SK-N-SH (cell line): ENCODE measurements at regions of chr4 and their contacts with region 1.

Region 1: GRCh38 chr4:8221476-8221875 is 22.4 kb downstream of the SH3TC1 start:
- DNase-seq: peak; percentile 80
- H3K4me3 ChIP-seq: no peak overlapping the region
- H3K27ac ChIP-seq: peak overlapping the region; percentile 40 to 98; a peak in 3 of 4 replicates
- H3K4me1 ChIP-seq: peaks cover 0 to 27% of the 10 kb centered on the region in 2 experiments; a peak in 1 of 4 replicates
- H3K27me3 ChIP-seq: no peaks in the 10 kb centered on the region
- CTCF ChIP-seq: no peak
- EP300 ChIP-seq: peak in 1 of 2 experiments; percentile 97; a peak in 2 of 4 replicates
- RAD21 ChIP-seq: no peak

Region 2: DNA sequence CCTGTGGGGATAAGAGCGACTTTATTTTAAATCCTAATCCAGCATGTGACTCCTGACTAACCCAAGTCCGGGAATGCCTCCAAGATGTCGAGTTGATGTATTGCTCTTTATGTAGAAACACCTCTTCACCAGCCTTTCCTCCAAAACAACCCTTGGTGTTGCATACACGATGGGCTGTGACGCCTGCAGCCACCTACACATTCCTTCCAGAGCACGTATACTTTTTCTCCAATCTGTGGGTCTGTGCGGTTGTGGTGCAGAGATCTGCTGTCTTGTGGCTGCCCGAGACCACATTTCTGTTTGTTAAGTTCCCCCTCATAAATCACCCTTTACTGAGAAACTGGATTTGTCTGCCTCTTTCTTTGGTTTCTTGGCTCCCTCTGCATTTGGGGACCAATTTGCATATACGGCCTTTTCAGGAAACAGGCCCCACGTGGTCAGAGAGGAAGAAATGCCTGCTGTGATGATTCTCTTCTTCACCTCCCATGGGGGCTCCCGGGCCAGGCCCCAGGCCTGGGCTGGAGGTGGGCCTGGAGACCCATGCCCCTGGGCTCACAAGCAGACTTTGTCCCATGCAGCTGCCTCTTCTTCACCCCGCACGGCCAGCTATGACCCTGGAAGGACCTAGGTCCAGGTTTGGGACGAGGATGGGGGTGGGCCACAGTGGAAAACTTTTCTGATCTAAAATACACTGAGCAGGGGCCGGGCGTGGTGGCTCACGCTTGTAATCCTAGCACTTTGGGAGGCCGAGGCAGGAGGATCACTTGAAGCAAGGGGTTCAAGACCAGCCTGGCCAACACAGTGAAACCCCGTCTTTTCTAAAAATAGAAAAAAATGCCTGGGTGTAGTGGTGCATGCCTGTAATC is 260.5 kb before region 1 on chr4:
- CTCF ChIA-PET with region 1: no interaction called
- POLR2A ChIA-PET with region 1: no interaction called
- DNase-seq: peak; percentile 26
- H3K4me3 ChIP-seq: no peak overlapping the region; a peak in 1 of 4 replicates
- H3K27ac ChIP-seq: peak overlapping the region; percentile 51 to 92; a peak in 3 of 4 replicates
- H3K4me1 ChIP-seq: peaks cover 16 to 49% of the 10 kb centered on the region in 2 experiments; a peak in 3 of 4 replicates
- H3K27me3 ChIP-seq: no peaks in the 10 kb centered on the region
- CTCF ChIP-seq: no peak
- EP300 ChIP-seq: peak in 1 of 2 experiments; percentile 90; a peak in 3 of 4 replicates
- RAD21 ChIP-seq: no peak

Region 3: DNA sequence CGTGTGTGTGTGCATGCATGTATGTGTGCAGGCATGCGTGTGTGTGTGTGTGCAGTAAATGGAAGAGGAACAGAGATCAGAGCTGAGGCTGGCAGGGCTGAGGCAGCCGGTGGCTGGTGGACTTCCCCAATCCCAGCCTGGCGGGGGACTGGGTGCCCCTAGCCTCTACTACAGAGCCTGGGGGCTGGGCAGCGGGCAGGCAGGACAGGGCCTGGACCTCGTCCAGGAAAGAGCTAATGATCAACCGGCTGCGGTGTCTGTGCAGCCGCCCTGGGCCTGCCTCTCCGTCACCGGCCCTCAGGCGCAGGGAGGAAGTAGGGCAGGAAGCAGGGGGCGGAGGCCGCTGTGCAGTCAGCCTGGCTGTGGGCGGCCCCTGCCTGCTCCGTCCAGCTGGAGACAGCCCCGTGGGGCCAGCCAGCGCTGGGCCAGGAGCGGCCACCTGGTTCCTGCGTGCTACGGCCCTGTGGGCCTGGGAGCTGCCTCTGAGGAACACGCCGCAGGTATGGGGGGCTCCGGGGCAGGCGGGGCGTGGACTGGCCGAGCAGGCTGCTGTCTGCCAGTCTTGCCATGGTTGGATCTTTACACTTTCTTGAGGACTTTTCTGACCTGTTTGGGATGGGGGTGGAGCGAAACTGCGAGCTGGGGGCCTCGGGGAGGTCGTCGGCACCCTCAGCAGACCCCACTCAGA is 22.4 kb before region 1 on chr4 and contains the start of gene SH3TC1:
- CTCF ChIA-PET with region 1: interaction called, 10 read pairs
- POLR2A ChIA-PET with region 1: interaction called, 5 read pairs
- DNase-seq: peak; percentile 97
- H3K4me3 ChIP-seq: peak within 1 kb of the TSS; percentile 48 to 57
- H3K27ac ChIP-seq: peak within 1 kb of the TSS in 1 of 2 experiments; percentile 90; a peak in 2 of 4 replicates
- H3K4me1 ChIP-seq: peaks cover 13 to 59% of the 10 kb centered on the region in 2 experiments; a peak in 2 of 4 replicates
- H3K27me3 ChIP-seq: no peaks in the 10 kb centered on the region
- CTCF ChIP-seq: no peak
- EP300 ChIP-seq: peak in 1 of 2 experiments; percentile 68; a peak in 2 of 4 replicates
- RAD21 ChIP-seq: no peak
- polyA plus RNA-seq, gene SH3TC1: 2.7 and 2.9 TPM in 2 replicates